ENCODE measurements at regions of chr12 and their contacts with region 1.

Region 1: GRCh38 chr12:76559400-76560085 is at the start of gene OSBPL8:
- DNase-seq: peak; percentile 94 to 99 (median 96)
- ATAC-seq: peak; percentile 67
- H3K4me3 ChIP-seq: peak within 1 kb of the TSS; percentile 79 to 92
- H3K4me3 Mint-ChIP-seq: peak within 1 kb of the TSS; percentile 96
- H3K27ac ChIP-seq: peak within 1 kb of the TSS; percentile 91 to 98
- H3K27ac Mint-ChIP-seq: peak within 1 kb of the TSS; percentile 96
- H3K4me1 ChIP-seq: peaks cover 40% of the 10 kb centered on the region
- H3K4me1 Mint-ChIP-seq: peaks cover 40% of the 10 kb centered on the region
- H3K27me3 ChIP-seq: no peaks in the 10 kb centered on the region
- H3K27me3 Mint-ChIP-seq: no peaks in the 10 kb centered on the region
- CTCF ChIP-seq: no peak
- total RNA-seq, gene OSBPL8: 112 to 115 TPM

Region 2: GRCh38 chr12:75511116-75512048 is 1048.2 kb before region 1 on chr12 and contains the start of gene KRR1:
- CTCF ChIA-PET with region 1: no interaction called
- POLR2A ChIA-PET with region 1: interaction called, 4 read pairs
- intact Hi-C with region 1: loop called (anchors 2 to 5 kb)
- DNase-seq: peak; percentile 75 to 98 (median 88)
- ATAC-seq: peak; percentile 95
- H3K4me3 ChIP-seq: peak within 1 kb of the TSS; percentile 89 to 93
- H3K4me3 Mint-ChIP-seq: peak within 1 kb of the TSS; percentile 98
- H3K27ac ChIP-seq: peak within 1 kb of the TSS; percentile 89
- H3K27ac Mint-ChIP-seq: peak within 1 kb of the TSS; percentile 98
- H3K4me1 ChIP-seq: peaks cover 18% of the 10 kb centered on the region
- H3K4me1 Mint-ChIP-seq: peaks cover 33% of the 10 kb centered on the region
- H3K27me3 ChIP-seq: no peaks in the 10 kb centered on the region
- H3K27me3 Mint-ChIP-seq: no peaks in the 10 kb centered on the region
- CTCF ChIP-seq: no peak
- total RNA-seq, gene KRR1: 158 to 161 TPM

Region 3: GRCh38 chr12:76310110-76310509 is 249.4 kb before region 1 on chr12:
- CTCF ChIA-PET with region 1: no interaction called
- POLR2A ChIA-PET with region 1: no interaction called
- intact Hi-C with region 1: no loop called
- DNase-seq: no peak
- ATAC-seq: no peak
- H3K4me3 ChIP-seq: no peak overlapping the region
- H3K4me3 Mint-ChIP-seq: no peak overlapping the region
- H3K27ac ChIP-seq: no peak overlapping the region
- H3K27ac Mint-ChIP-seq: no peak overlapping the region
- H3K4me1 ChIP-seq: no peaks in the 10 kb centered on the region
- H3K4me1 Mint-ChIP-seq: no peaks in the 10 kb centered on the region
- H3K27me3 ChIP-seq: no peaks in the 10 kb centered on the region
- H3K27me3 Mint-ChIP-seq: peaks cover 25% of the 10 kb centered on the region
- CTCF ChIP-seq: no peak

Region 4: GRCh38 chr12:76348079-76348901 is 211.3 kb before region 1 on chr12 and contains the start of gene BBS10:
- CTCF ChIA-PET with region 1: no interaction called
- POLR2A ChIA-PET with region 1: interaction called, 7 read pairs
- intact Hi-C with region 1: loop called (anchors 1 to 2 kb)
- DNase-seq: peak; percentile 71 to 92 (median 88)
- ATAC-seq: peak; percentile 96
- H3K4me3 ChIP-seq: peak within 1 kb of the TSS; percentile 76 to 78
- H3K4me3 Mint-ChIP-seq: peak within 1 kb of the TSS; percentile 96
- H3K27ac ChIP-seq: peak within 1 kb of the TSS; percentile 56 to 81
- H3K27ac Mint-ChIP-seq: peak within 1 kb of the TSS; percentile 93
- H3K4me1 ChIP-seq: peaks cover 14% of the 10 kb centered on the region
- H3K4me1 Mint-ChIP-seq: peaks cover 29% of the 10 kb centered on the region
- H3K27me3 ChIP-seq: no peaks in the 10 kb centered on the region
- H3K27me3 Mint-ChIP-seq: no peaks in the 10 kb centered on the region
- CTCF ChIP-seq: peak; percentile 11
- total RNA-seq, gene BBS10: 1.4 to 1.5 TPM

Region 5: DNA sequence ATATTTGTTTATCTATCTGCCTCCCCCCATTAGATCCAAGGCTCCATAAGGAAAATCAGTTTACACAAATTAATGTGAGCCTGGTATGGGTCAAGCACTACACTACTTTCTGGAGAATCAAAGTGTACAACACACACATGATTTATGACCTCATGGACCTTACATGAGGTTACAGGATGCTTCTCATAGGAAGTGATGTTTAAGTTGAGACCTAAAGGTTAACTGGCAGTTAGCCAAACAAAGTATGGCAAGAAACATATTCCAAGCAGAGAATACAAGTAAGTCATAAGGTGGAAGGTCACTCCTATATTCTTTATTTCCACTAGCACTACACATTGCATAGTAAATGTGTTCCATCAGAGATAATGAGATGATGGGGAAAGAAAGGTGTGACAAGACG is 39.2 kb before region 1 on chr12:
- CTCF ChIA-PET with region 1: no interaction called
- POLR2A ChIA-PET with region 1: interaction called, 3 read pairs
- intact Hi-C with region 1: loop called (anchors 2 to 5 kb)
- DNase-seq: no peak
- ATAC-seq: no peak
- H3K4me3 ChIP-seq: no peak overlapping the region
- H3K4me3 Mint-ChIP-seq: no peak overlapping the region
- H3K27ac ChIP-seq: no peak overlapping the region
- H3K27ac Mint-ChIP-seq: no peak overlapping the region
- H3K4me1 ChIP-seq: peaks cover 16% of the 10 kb centered on the region
- H3K4me1 Mint-ChIP-seq: peaks cover 64% of the 10 kb centered on the region
- H3K27me3 ChIP-seq: no peaks in the 10 kb centered on the region
- H3K27me3 Mint-ChIP-seq: no peaks in the 10 kb centered on the region
- CTCF ChIP-seq: no peak

Region 6: GRCh38 chr12:76533331-76533730 is 26.2 kb before region 1 on chr12:
- CTCF ChIA-PET with region 1: no interaction called
- POLR2A ChIA-PET with region 1: no interaction called
- intact Hi-C with region 1: no loop called
- DNase-seq: no peak
- ATAC-seq: no peak
- H3K4me3 ChIP-seq: no peak overlapping the region
- H3K4me3 Mint-ChIP-seq: no peak overlapping the region
- H3K27ac ChIP-seq: no peak overlapping the region
- H3K27ac Mint-ChIP-seq: no peak overlapping the region
- H3K4me1 ChIP-seq: peaks cover 8% of the 10 kb centered on the region
- H3K4me1 Mint-ChIP-seq: peaks cover 55% of the 10 kb centered on the region
- H3K27me3 ChIP-seq: no peaks in the 10 kb centered on the region
- H3K27me3 Mint-ChIP-seq: no peaks in the 10 kb centered on the region
- CTCF ChIP-seq: no peak

Region 7: DNA sequence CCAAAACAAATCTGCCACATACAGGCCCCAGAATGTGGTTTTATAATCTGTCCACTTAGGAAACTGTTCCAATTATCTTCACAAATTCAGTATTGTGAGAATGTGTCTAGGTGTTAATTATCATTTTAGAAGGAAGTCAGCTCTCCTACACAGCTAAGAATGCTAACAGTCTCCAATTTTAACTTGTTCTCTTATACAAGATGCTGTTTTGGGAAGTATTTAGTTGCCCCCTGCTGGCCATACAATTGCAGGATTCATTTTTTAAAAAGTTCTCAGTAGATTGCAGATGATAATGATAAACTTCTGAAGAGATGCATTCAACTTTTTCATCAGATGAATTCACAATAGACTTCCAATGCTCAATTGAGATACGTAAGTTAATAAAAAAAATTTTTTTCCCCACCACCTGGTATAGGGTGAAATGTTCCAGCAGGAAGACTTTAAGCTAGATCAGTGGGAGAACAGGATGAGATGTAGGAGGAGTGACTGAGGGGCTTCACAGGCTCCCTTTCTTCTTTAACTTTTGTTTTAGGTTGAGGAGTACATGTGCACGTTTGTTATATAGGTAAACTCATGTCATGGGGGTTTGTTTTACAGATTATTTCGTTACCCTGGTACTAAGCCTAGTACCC is 27.3 kb after region 1 on chr12:
- CTCF ChIA-PET with region 1: interaction called, 5 read pairs
- POLR2A ChIA-PET with region 1: no interaction called
- intact Hi-C with region 1: loop called in 1 of 2 experiments (anchors 2 kb)
- DNase-seq: peak in 8 of 9 experiments; percentile 2 to 74 (median 44)
- ATAC-seq: peak; percentile 68
- H3K4me3 ChIP-seq: no peak overlapping the region
- H3K4me3 Mint-ChIP-seq: no peak overlapping the region
- H3K27ac ChIP-seq: no peak overlapping the region
- H3K27ac Mint-ChIP-seq: no peak overlapping the region
- H3K4me1 ChIP-seq: no peaks in the 10 kb centered on the region
- H3K4me1 Mint-ChIP-seq: peaks cover 2% of the 10 kb centered on the region
- H3K27me3 ChIP-seq: no peaks in the 10 kb centered on the region
- H3K27me3 Mint-ChIP-seq: no peaks in the 10 kb centered on the region
- CTCF ChIP-seq: peak; percentile 93